ENCODE measurements at regions of chr11 and their contacts with region 1.

Region 1: DNA sequence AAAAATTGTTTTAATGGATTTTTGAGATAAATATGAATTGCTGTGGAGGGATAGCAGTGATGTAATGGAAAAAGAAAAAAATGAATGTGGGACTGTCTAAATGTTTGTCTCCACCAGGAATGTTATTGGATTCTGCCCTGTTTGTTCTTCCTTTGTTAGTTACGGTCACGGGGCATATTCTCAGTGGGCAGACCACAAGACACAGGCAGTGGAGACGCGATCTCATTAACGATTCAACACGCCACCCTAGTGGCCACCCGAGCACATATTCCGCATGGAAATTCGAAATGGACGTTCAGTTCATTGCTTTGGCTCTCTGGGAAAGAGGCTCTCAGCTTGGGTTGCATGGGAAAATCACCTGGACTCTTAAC is 151.8 kb upstream of the TTC12 start:
- DNase-seq: no peak
- H3K4me3 ChIP-seq: no peak overlapping the region
- H3K27ac ChIP-seq: no peak overlapping the region
- H3K4me1 ChIP-seq: peaks cover 4 to 10% of the 10 kb centered on the region in 2 donors
- H3K27me3 ChIP-seq: no peaks in the 10 kb centered on the region
- CTCF ChIP-seq: no peak
- POLR2A ChIP-seq: no peak

Region 2: GRCh38 chr11:113124006-113124405 is 38.6 kb before region 1 on chr11:
- intact Hi-C with region 1: loop called (anchors 2 kb)
- DNase-seq: no peak
- H3K4me3 ChIP-seq: no peak overlapping the region
- H3K27ac ChIP-seq: no peak overlapping the region
- H3K4me1 ChIP-seq: no peaks in the 10 kb centered on the region
- H3K27me3 ChIP-seq: no peaks in the 10 kb centered on the region
- CTCF ChIP-seq: no peak
- POLR2A ChIP-seq: no peak

Region 3: DNA sequence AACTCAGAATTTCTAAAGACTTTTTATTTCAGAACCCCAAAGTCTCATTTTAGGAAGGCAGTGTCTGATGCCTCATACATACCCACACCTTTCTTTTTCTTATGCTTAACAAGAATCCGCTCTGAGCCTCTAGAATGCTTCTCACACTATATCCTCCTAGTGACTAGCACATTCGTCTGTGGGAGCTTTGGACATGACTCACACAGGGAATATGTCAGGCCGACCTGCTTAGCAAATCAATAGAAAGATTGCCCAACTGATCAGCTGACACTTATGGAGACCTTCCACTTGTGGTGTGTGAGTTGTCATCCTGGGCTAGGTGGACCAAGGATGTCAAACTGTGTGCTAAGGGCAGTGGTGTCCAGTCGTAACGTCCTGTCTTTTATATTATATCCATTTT is 21.9 kb after region 1 on chr11:
- intact Hi-C with region 1: no loop called
- DNase-seq: no peak
- H3K4me3 ChIP-seq: no peak overlapping the region
- H3K27ac ChIP-seq: no peak overlapping the region
- H3K4me1 ChIP-seq: no peaks in the 10 kb centered on the region
- H3K27me3 ChIP-seq: no peaks in the 10 kb centered on the region
- CTCF ChIP-seq: no peak
- POLR2A ChIP-seq: no peak